H1 (cell line): ENCODE measurements at regions of chr7 and their contacts with region 1.

Region 1: GRCh38 chr7:142459551-142459963 is 201.7 kb upstream of the PRSS58 start:
- DNase-seq: peak in 1 of 2 experiments; percentile 53
- H3K4me3 ChIP-seq: no peak overlapping the region
- H3K27ac ChIP-seq: no peak overlapping the region
- H3K4me1 ChIP-seq: no peaks in the 10 kb centered on the region
- H3K27me3 ChIP-seq: no peaks in the 10 kb centered on the region
- CTCF ChIP-seq: peak; percentile 33 to 82 (median 81)
- EP300 ChIP-seq: no peak
- POLR2A ChIP-seq: no peak
- RAD21 ChIP-seq: peak; percentile 65 to 74

Region 2: GRCh38 chr7:142420559-142421362 is 38.8 kb before region 1 on chr7:
- CTCF ChIA-PET with region 1: interaction called, 25 read pairs
- POLR2A ChIA-PET with region 1: no interaction called
- DNase-seq: no peak
- H3K4me3 ChIP-seq: no peak overlapping the region
- H3K27ac ChIP-seq: no peak overlapping the region
- H3K4me1 ChIP-seq: peaks cover 0 to 5% (median 1%) of the 10 kb centered on the region in 4 experiments; a peak in 2 of 7 replicates
- H3K27me3 ChIP-seq: no peaks in the 10 kb centered on the region
- CTCF ChIP-seq: peak; percentile 28 to 52 (median 35)
- EP300 ChIP-seq: no peak
- POLR2A ChIP-seq: no peak
- RAD21 ChIP-seq: peak; percentile 56 to 62

Region 3: GRCh38 chr7:142469696-142470543 is 10.4 kb after region 1 on chr7:
- CTCF ChIA-PET with region 1: interaction called, 682 read pairs
- POLR2A ChIA-PET with region 1: no interaction called
- DNase-seq: no peak
- H3K4me3 ChIP-seq: no peak overlapping the region
- H3K27ac ChIP-seq: no peak overlapping the region
- H3K4me1 ChIP-seq: no peaks in the 10 kb centered on the region
- H3K27me3 ChIP-seq: no peaks in the 10 kb centered on the region; a peak in 1 of 7 replicates
- CTCF ChIP-seq: no peak
- EP300 ChIP-seq: no peak
- POLR2A ChIP-seq: no peak
- RAD21 ChIP-seq: no peak

Region 4: DNA sequence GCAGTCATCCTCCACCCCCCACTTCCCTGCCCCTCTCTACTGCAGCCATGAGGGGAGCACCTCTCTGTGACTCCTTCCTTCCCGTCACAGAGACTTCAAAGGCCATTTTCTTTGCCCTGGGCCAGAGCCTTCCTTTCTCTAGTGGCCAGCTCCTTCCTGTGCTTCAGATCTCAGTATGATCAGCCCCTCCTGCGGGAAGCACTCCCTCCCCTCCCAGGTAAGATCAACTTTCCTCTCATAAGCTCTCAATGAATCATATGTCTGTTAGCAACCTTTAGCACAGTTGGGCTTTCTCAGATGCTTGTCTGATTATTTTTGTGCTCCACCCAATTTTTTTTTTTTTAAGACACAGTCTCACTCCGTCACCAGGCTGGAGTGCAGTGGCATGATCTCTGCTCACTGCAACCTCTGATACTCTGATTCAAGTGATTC is 48.7 kb after region 1 on chr7:
- CTCF ChIA-PET with region 1: interaction called, 220 read pairs
- POLR2A ChIA-PET with region 1: no interaction called
- DNase-seq: no peak
- H3K4me3 ChIP-seq: no peak overlapping the region
- H3K27ac ChIP-seq: no peak overlapping the region
- H3K4me1 ChIP-seq: no peaks in the 10 kb centered on the region
- H3K27me3 ChIP-seq: no peaks in the 10 kb centered on the region
- CTCF ChIP-seq: no peak
- EP300 ChIP-seq: no peak
- POLR2A ChIP-seq: no peak
- RAD21 ChIP-seq: no peak